ENCODE measurements at regions of chr7 and their contacts with region 1.

Region 1: GRCh38 chr7:13036256-13036780 is 348.9 kb downstream of the ARL4A start:
- DNase-seq: peak; percentile 62
- ATAC-seq: no peak
- H3K4me3 ChIP-seq: no peak overlapping the region
- H3K27ac ChIP-seq: peak overlapping the region; percentile 70
- H3K4me1 ChIP-seq: peaks cover 7% of the 10 kb centered on the region
- H3K27me3 ChIP-seq: no peaks in the 10 kb centered on the region
- CTCF ChIP-seq: no peak
- POLR2A ChIP-seq: no peak
- RAD21 ChIP-seq: no peak

Region 2: DNA sequence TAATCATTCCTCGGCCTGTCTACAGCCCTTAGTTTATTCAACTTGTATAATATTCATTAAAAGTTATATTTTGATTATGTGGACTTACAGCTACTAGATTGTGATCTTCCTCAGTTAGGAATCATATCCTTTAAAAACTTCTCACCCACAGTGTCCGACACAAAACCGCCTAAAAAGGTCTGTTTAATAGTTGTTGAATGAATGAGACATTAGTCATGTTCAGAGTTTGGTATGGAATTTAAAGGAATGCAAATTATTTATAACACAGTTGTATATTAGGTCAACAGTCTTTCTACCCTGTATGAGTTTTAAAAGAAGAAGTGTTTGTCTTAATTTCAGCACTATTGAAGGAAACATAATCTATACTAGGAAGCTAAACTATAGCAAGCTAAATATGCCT is 41.1 kb after region 1 on chr7:
- CTCF ChIA-PET with region 1: no interaction called
- POLR2A ChIA-PET with region 1: no interaction called
- dilution Hi-C with region 1: no loop called
- in situ Hi-C with region 1: no loop called
- intact Hi-C with region 1: loop called (anchors 5 kb)
- DNase-seq: peak; percentile 47
- ATAC-seq: peak; percentile 95
- H3K4me3 ChIP-seq: no peak overlapping the region
- H3K27ac ChIP-seq: no peak overlapping the region
- H3K4me1 ChIP-seq: peaks cover 5% of the 10 kb centered on the region
- H3K27me3 ChIP-seq: no peaks in the 10 kb centered on the region
- CTCF ChIP-seq: no peak
- POLR2A ChIP-seq: no peak
- RAD21 ChIP-seq: no peak